ENCODE measurements at regions of chr9 and their contacts with region 1.

Region 1: DNA sequence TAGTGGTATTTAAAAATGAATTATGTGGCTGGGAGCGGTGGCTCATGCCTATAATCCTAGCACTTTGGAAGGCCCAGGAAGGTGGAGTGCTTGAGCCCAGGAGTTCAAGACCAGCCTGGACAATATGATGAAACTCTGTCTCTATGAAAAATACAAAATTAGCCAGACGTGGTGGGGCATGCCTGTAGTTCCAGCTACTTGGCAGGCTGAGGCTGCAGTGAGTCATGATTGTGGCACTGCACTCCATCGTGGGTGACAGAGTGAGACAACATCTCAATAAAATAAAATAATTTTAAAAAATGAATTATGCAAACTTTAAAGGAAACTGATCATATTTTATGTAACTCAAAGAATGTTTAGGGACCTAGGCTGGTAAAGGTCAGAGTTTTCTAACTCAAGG is 310.8 kb upstream of the DMRT1 start:
- DNase-seq: no peak
- ATAC-seq: no peak
- H3K4me3 ChIP-seq: no peak overlapping the region
- H3K4me3 Mint-ChIP-seq: no peak overlapping the region
- H3K27ac ChIP-seq: no peak overlapping the region
- H3K27ac Mint-ChIP-seq: no peak overlapping the region
- H3K4me1 ChIP-seq: no peaks in the 10 kb centered on the region
- H3K4me1 Mint-ChIP-seq: no peaks in the 10 kb centered on the region
- H3K27me3 ChIP-seq: no peaks in the 10 kb centered on the region
- H3K27me3 Mint-ChIP-seq: peaks cover 16 to 28% of the 10 kb centered on the region in 2 donors
- CTCF ChIP-seq: no peak

Region 2: GRCh38 chr9:512555-513272 is 18.0 kb before region 1 on chr9:
- intact Hi-C with region 1: loop called (anchors 1 kb)
- DNase-seq: no peak
- ATAC-seq: no peak
- H3K4me3 ChIP-seq: no peak overlapping the region
- H3K4me3 Mint-ChIP-seq: no peak overlapping the region
- H3K27ac ChIP-seq: no peak overlapping the region
- H3K27ac Mint-ChIP-seq: no peak overlapping the region
- H3K4me1 ChIP-seq: no peaks in the 10 kb centered on the region
- H3K4me1 Mint-ChIP-seq: peaks cover 5 to 7% of the 10 kb centered on the region in 2 donors
- H3K27me3 ChIP-seq: peaks cover 3% of the 10 kb centered on the region
- H3K27me3 Mint-ChIP-seq: peaks cover 18 to 29% of the 10 kb centered on the region in 2 donors
- CTCF ChIP-seq: no peak

Region 3: GRCh38 chr9:757246-757881 is 226.7 kb after region 1 on chr9:
- intact Hi-C with region 1: no loop called
- DNase-seq: peak in 1 of 2 donors; percentile 29
- ATAC-seq: peak in 1 of 3 donors; percentile 62
- H3K4me3 ChIP-seq: no peak overlapping the region
- H3K4me3 Mint-ChIP-seq: no peak overlapping the region
- H3K27ac ChIP-seq: no peak overlapping the region
- H3K27ac Mint-ChIP-seq: no peak overlapping the region
- H3K4me1 ChIP-seq: peaks cover 10% of the 10 kb centered on the region
- H3K4me1 Mint-ChIP-seq: peaks cover 13 to 19% of the 10 kb centered on the region in 2 donors
- H3K27me3 ChIP-seq: no peaks in the 10 kb centered on the region
- H3K27me3 Mint-ChIP-seq: peaks cover 8% of the 10 kb centered on the region in 2 donors
- CTCF ChIP-seq: no peak